Activated CD8-positive, alpha-beta T cell treated with anti-CD3 and anti-CD28 coated beads, Interleukin-2, amount 10 ng/mL, durations not matched to agents 7 days and 5 days (primary cell): ENCODE measurements at regions of chr3 and their contacts with region 1.

Region 1: GRCh38 chr3:128680602-128681368 is 30.2 kb upstream of the RPN1 start:
- DNase-seq: peak; percentile 98
- ATAC-seq: peak; percentile 98
- H3K4me3 Mint-ChIP-seq: peak overlapping the region; percentile 90
- H3K27ac Mint-ChIP-seq: peak overlapping the region; percentile 99
- H3K4me1 Mint-ChIP-seq: peaks cover 39% of the 10 kb centered on the region
- H3K27me3 Mint-ChIP-seq: peaks cover 8% of the 10 kb centered on the region

Region 2: DNA sequence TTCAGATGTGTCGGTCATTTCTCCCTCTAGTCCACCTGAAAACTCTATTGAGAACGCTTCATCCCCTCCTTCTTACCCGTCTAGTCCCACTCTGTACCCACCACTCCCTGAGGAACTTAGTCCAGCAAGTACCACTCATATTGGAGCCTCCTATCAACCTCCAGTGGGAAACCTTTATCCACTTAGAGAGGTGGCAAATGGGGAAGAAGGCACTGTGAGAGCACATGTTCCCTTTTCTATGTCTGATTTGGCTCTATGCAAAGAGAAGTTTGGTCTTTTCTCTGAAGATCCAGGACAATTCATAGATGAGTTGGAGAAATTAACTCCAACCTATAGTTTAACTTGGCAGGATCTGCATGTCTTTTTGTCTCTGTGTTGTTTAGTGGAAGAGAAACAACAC is 13.1 kb before region 1 on chr3:
- CTCF ChIA-PET with region 1: interaction called, 22 read pairs
- POLR2A ChIA-PET with region 1: interaction called, 12 read pairs
- DNase-seq: no peak
- ATAC-seq: no peak
- H3K4me3 Mint-ChIP-seq: no peak overlapping the region
- H3K27ac Mint-ChIP-seq: no peak overlapping the region
- H3K4me1 Mint-ChIP-seq: peaks cover 3% of the 10 kb centered on the region
- H3K27me3 Mint-ChIP-seq: peaks cover 43% of the 10 kb centered on the region

Region 3: DNA sequence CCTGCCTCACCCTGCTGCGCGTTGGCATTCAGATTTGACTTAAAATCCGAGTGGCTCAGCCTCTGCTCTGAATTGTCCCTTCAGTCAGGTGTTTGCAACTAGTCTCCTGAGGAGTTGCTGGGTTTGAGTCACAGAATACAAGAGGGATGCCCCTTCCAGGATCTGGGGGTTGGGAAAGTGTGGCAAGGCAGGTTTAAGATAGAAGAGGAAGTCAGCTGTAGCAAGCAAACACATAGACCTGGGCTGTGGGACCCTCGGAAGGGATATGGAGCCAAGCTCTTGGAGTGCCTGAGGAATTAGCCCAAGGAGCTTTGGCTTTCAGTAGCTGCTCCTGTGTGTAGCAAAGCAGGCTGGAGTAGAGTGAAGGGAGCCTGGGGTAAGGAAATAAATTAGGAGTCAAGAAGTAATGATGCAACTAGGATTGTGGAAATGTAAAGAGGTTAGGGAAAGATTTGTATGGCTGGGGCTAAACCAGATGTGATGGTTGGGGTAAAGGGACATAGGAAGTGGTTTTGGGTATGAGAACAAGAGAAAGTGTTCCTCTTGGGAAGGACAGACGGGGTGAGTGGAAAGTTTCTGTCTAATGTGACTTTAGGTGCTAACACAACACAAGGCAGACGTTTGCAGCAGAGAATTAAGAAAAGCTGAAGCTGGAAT is 86.4 kb after region 1 on chr3:
- CTCF ChIA-PET with region 1: interaction called, 11 read pairs
- POLR2A ChIA-PET with region 1: no interaction called
- DNase-seq: no peak
- ATAC-seq: no peak
- H3K4me3 Mint-ChIP-seq: no peak overlapping the region
- H3K27ac Mint-ChIP-seq: peak overlapping the region; percentile 4
- H3K4me1 Mint-ChIP-seq: peaks cover 59% of the 10 kb centered on the region
- H3K27me3 Mint-ChIP-seq: no peaks in the 10 kb centered on the region

Region 4: DNA sequence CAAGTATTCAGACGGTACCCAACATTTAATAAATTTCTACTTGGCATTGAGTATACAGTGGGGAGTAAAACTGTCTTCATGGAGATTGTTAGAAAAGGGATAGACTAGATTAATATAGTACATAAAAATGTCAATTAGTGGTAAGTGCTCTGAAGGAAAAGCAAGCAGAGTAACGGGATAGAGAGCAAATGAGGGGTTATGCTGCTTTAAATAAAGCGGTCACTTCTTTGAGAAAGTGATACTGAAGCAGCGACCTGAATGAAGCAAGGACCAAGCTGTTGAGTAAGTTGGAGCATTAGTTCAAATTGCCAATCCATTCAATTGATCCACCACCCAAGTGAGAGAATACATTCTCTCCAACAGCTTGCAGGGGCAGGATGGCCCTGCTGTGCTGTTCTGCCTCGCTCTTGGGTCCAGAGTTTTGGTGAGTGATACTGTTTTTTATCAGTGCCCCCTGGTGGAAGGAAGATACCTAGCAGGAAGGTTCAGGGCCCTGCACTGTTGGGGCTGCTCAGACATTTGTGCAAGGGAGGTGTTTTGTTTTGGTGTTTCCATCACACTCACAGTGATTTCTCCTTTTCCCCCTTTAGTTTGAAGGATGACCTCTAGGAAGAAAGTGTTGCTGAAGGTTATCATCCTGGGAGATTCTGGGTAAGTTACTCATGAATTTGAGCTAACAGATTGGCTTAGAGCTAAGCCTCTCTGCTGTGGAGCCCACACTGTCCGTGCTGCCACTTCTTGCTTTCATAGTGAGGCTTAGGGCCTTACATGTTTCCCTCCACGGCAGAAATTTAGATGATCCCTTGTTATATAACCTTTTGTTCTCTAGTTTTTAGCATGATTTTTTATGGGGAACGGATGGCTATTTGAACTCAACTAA is 114.2 kb after region 1 on chr3:
- CTCF ChIA-PET with region 1: interaction called, 256 read pairs
- POLR2A ChIA-PET with region 1: interaction called, 35 read pairs
- DNase-seq: peak; percentile 81
- ATAC-seq: peak; percentile 91
- H3K4me3 Mint-ChIP-seq: no peak overlapping the region
- H3K27ac Mint-ChIP-seq: peak overlapping the region; percentile 78
- H3K4me1 Mint-ChIP-seq: peaks cover 76% of the 10 kb centered on the region
- H3K27me3 Mint-ChIP-seq: no peaks in the 10 kb centered on the region

Region 5: DNA sequence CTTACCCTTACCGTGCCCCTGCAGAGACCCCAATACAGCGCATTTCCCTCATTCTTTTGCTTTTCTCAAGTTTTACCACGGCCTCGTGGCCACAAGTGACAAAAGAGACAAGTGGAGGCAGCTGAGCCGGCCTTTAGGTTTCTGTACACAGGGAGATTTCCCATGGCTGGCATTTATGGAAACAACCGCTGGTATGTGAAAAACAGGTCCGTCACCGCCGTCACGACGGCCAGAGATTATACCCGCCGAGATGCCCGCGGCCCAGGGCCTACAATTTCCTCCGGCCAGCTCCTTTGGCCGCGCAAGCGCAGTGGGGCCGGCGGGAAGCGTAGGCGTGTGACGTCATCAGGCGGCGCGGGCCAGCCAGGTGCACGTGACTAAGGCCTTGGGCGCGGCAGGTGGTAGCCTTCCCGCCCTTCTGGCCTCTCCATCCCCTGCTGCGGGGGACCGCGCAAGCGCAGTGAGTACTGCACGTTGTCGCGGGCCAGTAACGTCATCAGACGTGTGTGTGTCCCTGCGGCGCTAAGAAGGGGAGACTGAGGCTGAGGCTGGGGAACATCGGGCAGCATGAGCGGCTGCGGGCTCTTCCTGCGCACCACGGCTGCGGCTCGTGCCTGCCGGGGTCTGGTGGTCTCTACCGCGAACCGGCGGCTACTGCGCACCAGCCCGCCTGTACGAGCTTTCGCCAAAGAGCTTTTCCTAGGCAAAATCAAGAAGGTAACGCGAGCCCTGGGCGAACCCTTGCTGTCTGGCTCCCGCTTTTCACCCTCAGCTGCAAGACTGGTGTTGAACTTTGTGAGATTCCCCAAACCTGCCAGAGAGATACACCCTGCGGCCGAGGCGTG is 198.6 kb after region 1 on chr3 and contains the start of gene ACAD9:
- CTCF ChIA-PET with region 1: interaction called, 45 read pairs
- POLR2A ChIA-PET with region 1: interaction called, 4 read pairs
- DNase-seq: peak; percentile 97
- ATAC-seq: peak; percentile 96
- H3K4me3 Mint-ChIP-seq: peak within 1 kb of the TSS; percentile 83
- H3K27ac Mint-ChIP-seq: peak within 1 kb of the TSS; percentile 90
- H3K4me1 Mint-ChIP-seq: peaks cover 57% of the 10 kb centered on the region
- H3K27me3 Mint-ChIP-seq: peaks cover 4% of the 10 kb centered on the region
- total RNA-seq, gene ACAD9: 61.3 to 68.3 TPM